MCF 10A (cell line): ENCODE measurements at regions of chr5 and their contacts with region 1.

Region 1: DNA sequence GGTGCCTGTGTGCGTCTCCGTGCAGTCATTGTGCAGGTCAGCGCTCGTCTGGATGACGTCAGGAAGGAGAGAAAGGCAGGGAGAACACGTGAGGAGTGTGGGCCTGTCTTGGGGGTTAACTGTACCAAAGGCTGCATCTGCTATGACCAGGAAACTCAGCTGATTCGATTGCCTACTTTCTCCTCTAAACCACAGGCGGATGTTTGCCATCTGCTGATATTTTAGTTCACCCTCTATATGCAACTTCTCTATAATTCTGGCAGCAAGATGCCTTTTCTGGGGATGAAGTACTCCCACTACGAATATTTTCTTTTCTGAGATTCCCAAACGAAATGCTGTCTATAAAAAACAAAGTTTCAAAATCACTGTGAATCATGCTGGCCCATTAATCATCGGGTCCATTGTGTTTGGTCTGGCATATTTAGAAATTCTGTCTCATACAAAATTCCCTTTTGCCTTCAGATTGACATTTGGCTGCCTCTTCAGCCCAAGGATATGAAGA is 24.7 kb downstream of the PCSK1 start:
- DNase-seq: peak; percentile 98
- H3K4me3 Mint-ChIP-seq: peak overlapping the region; percentile 61
- H3K27ac Mint-ChIP-seq: peak overlapping the region; percentile 98
- H3K4me1 Mint-ChIP-seq: peaks cover 22% of the 10 kb centered on the region
- H3K27me3 Mint-ChIP-seq: no peaks in the 10 kb centered on the region
- CTCF ChIP-seq: no peak

Region 2: GRCh38 chr5:96384353-96384752 is 24.0 kb before region 1 on chr5:
- CTCF ChIA-PET with region 1: no interaction called
- POLR2A ChIA-PET with region 1: interaction called, 19 read pairs
- intact Hi-C with region 1: loop called (anchors 1 kb)
- DNase-seq: peak; percentile 93
- H3K4me3 Mint-ChIP-seq: no peak overlapping the region
- H3K27ac Mint-ChIP-seq: no peak overlapping the region
- H3K4me1 Mint-ChIP-seq: peaks cover 30% of the 10 kb centered on the region
- H3K27me3 Mint-ChIP-seq: no peaks in the 10 kb centered on the region
- CTCF ChIP-seq: no peak

Region 3: GRCh38 chr5:96492654-96493053 is 84.3 kb after region 1 on chr5:
- CTCF ChIA-PET with region 1: no interaction called
- POLR2A ChIA-PET with region 1: interaction called, 36 read pairs
- intact Hi-C with region 1: no loop called
- DNase-seq: peak; percentile 95
- H3K4me3 Mint-ChIP-seq: peak overlapping the region; percentile 40
- H3K27ac Mint-ChIP-seq: peak overlapping the region; percentile 96
- H3K4me1 Mint-ChIP-seq: peaks cover 10% of the 10 kb centered on the region
- H3K27me3 Mint-ChIP-seq: no peaks in the 10 kb centered on the region
- CTCF ChIP-seq: no peak

Region 4: GRCh38 chr5:96533371-96533770 is 125.0 kb after region 1 on chr5:
- CTCF ChIA-PET with region 1: no interaction called
- POLR2A ChIA-PET with region 1: no interaction called
- intact Hi-C with region 1: no loop called
- DNase-seq: no peak
- H3K4me3 Mint-ChIP-seq: no peak overlapping the region
- H3K27ac Mint-ChIP-seq: no peak overlapping the region
- H3K4me1 Mint-ChIP-seq: peaks cover 12% of the 10 kb centered on the region
- H3K27me3 Mint-ChIP-seq: no peaks in the 10 kb centered on the region
- CTCF ChIP-seq: no peak